Sciatic nerve (tissue), 2 donors: ENCODE measurements at regions of chr22 and their contacts with region 1.

Region 1: DNA sequence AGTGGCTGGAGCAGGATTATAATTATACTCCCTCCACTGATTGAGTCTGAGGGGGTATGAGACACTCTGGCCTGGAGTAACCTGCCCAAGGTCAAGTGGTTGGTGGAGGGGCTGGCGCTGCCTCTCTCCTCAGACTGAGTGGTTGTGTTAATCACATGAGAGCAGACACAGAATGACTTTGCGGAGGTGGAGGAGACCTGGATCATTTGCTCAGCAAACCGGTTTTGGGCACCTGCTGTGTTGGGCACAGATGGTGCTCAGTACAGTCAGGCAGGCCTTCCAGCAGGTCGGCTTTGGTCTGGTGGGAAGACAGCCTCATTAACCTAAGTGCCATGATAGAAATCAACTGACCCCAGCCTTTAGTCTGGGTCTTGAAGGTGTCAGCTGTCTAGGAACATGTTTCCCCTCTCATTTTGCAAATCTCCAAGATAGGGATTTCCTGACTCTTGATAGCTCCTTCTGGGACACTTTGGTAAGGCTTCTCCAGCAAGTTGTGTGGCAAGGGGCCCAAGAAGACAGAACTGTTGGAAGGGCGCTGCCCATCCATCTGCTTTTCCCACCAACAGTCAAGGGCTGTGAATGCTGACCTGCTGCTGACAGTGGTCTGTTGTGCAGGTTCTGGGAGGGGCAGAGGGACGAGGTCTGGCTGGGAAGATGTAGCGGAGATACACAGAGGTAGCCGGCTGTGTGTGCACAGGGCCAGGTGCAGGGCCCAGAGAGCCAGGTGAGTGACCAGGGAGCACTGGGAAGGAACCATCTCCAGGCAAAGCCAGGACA is 12.1 kb downstream of the BCR start:
- DNase-seq: no peak
- ATAC-seq: no peak

Region 2: GRCh38 chr22:23240639-23241389 is 48.4 kb after region 1 on chr22:
- intact Hi-C with region 1: loop called (anchors 5 kb)
- DNase-seq: no peak
- ATAC-seq: no peak

Region 3: DNA sequence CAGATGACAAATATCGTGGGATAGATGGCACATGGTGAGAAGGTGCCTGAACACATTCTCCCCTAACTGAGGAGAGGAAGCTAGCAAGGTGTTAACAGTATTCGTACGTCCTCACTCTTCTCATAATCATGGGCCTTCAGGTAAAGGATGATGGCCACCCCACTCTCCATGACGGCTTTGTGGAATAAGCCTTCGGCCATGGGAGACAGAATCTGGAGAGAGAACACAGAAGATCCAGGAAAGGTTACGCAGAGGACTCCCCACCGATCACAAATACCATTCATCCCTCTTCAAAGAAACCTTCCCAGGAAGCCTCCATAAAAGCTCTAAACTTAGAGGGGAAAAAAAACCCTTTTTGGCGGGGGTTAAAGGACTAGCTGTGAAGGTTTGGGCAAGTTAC is 177.9 kb after region 1 on chr22:
- intact Hi-C with region 1: loop called (anchors 2 kb)
- DNase-seq: no peak
- ATAC-seq: no peak